Naive thymus-derived CD4-positive, alpha-beta T cell (primary cell): ENCODE measurements at regions of chr12 and their contacts with region 1.

Region 1: GRCh38 chr12:39443081-39443928 is at the start of gene KIF21A:
- DNase-seq: peak; percentile 71 to 91 (median 82)
- ATAC-seq: peak; percentile 93
- H3K4me3 ChIP-seq: peak within 1 kb of the TSS; percentile 75
- H3K4me3 Mint-ChIP-seq: peak within 1 kb of the TSS; percentile 86 to 98 (median 92)
- H3K27ac ChIP-seq: peak within 1 kb of the TSS; percentile 66
- H3K27ac Mint-ChIP-seq: peak within 1 kb of the TSS; percentile 79 to 97 (median 89)
- H3K4me1 ChIP-seq: peaks cover 9 to 10% of the 10 kb centered on the region in 2 donors
- H3K4me1 Mint-ChIP-seq: peaks cover 10 to 28% (median 13%) of the 10 kb centered on the region in 7 donors
- H3K27me3 ChIP-seq: no peaks in the 10 kb centered on the region
- H3K27me3 Mint-ChIP-seq: peaks cover 0 to 32% (median 4%) of the 10 kb centered on the region in 5 donors
- total RNA-seq, gene KIF21A: 5.0 to 12.0 (median 9.3) TPM

Region 2: GRCh38 chr12:38906482-38907170 is 536.7 kb before region 1 on chr12:
- CTCF ChIA-PET with region 1: no interaction called
- POLR2A ChIA-PET with region 1: no interaction called
- intact Hi-C with region 1: loop called in 1 of 2 experiments (anchors 5 kb)
- DNase-seq: peak; percentile 25 to 83 (median 49)
- ATAC-seq: peak; percentile 77
- H3K4me3 ChIP-seq: peak overlapping the region; percentile 76
- H3K4me3 Mint-ChIP-seq: peak overlapping the region; percentile 86 to 97 (median 92)
- H3K27ac ChIP-seq: no peak overlapping the region
- H3K27ac Mint-ChIP-seq: peak overlapping the region in 6 of 9 donors; percentile 38 to 95 (median 56)
- H3K4me1 ChIP-seq: no peaks in the 10 kb centered on the region
- H3K4me1 Mint-ChIP-seq: peaks cover 17 to 36% (median 25%) of the 10 kb centered on the region in 7 donors
- H3K27me3 ChIP-seq: no peaks in the 10 kb centered on the region
- H3K27me3 Mint-ChIP-seq: peaks cover 6 to 27% (median 21%) of the 10 kb centered on the region in 5 donors

Region 3: DNA sequence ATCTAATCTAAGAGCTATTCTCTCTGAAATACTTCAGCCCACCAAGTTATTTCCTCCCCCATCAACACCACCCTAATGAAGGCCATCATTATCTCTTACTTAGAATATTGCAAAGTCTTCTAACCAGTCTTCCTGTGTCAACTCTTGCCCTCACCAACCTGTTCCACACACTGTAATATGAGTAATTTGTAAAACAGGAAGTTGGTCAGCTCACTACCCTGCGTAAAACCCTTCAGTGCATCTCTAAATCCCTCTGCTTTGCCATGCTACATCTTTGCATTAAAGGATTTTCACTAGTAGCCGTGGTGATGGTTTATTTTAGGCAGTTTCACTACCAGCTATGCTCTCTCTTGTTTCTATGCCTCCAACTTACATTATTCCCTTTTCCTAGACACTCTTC is 70.4 kb before region 1 on chr12:
- CTCF ChIA-PET with region 1: no interaction called
- POLR2A ChIA-PET with region 1: no interaction called
- intact Hi-C with region 1: loop called in 1 of 2 experiments (anchors 5 kb)
- DNase-seq: no peak
- ATAC-seq: peak; percentile 87
- H3K4me3 ChIP-seq: no peak overlapping the region
- H3K4me3 Mint-ChIP-seq: peak overlapping the region in 1 of 10 donors; percentile 21
- H3K27ac ChIP-seq: no peak overlapping the region
- H3K27ac Mint-ChIP-seq: peak overlapping the region in 1 of 9 donors; percentile 35
- H3K4me1 ChIP-seq: peaks cover 3 to 22% of the 10 kb centered on the region in 2 donors
- H3K4me1 Mint-ChIP-seq: peaks cover 0 to 15% (median 8%) of the 10 kb centered on the region in 7 donors
- H3K27me3 ChIP-seq: no peaks in the 10 kb centered on the region
- H3K27me3 Mint-ChIP-seq: no peaks in the 10 kb centered on the region

Region 4: GRCh38 chr12:39692258-39692853 is 249.1 kb after region 1 on chr12:
- CTCF ChIA-PET with region 1: no interaction called
- POLR2A ChIA-PET with region 1: no interaction called
- intact Hi-C with region 1: loop called (anchors 2 to 5 kb)
- DNase-seq: peak in 5 of 9 donors; percentile 29 to 47 (median 43)
- ATAC-seq: peak; percentile 64
- H3K4me3 ChIP-seq: no peak overlapping the region
- H3K4me3 Mint-ChIP-seq: peak overlapping the region in 1 of 10 donors; percentile 15
- H3K27ac ChIP-seq: no peak overlapping the region
- H3K27ac Mint-ChIP-seq: no peak overlapping the region
- H3K4me1 ChIP-seq: peaks cover 0 to 3% of the 10 kb centered on the region in 2 donors
- H3K4me1 Mint-ChIP-seq: peaks cover 0 to 7% (median 5%) of the 10 kb centered on the region in 7 donors
- H3K27me3 ChIP-seq: no peaks in the 10 kb centered on the region
- H3K27me3 Mint-ChIP-seq: peaks cover 0 to 12% (median 8%) of the 10 kb centered on the region in 5 donors